ENCODE measurements at regions of chr2 and their contacts with region 1.

Region 1: DNA sequence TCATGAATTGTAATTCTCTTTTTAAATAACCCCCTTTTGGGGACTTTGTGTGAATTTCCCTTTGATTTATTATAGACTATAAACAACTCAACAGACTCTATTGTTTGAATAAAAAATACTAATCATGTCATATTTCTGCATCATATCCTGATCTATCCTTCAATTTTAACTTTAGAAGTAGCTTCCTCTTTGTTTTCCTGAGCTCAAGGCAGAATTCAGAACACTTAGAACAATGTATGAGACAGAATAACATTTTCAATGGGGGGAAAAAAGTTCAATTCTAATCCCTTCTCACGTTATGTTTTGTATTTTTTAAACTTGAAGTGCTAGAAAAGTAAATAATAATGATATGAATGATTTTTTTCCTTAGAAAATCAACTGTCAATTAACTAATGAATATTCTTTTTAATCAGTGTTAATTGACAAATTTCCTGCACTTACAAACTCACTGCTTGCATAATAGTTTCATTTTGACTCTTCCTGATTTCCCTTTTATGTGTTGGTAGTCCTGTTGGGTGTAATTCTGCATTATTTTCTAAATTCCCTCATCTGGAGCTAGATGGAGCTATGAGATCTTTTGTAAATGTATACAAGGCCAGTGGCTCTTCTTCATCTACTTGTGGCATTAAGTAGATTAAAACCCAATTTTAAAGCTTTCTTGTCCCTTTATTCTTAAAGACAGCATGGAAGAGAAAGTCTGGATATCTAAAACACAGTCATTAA is 326.1 kb downstream of the PARD3B start:
- DNase-seq: no peak
- H3K4me3 Mint-ChIP-seq: no peak overlapping the region
- H3K27ac Mint-ChIP-seq: no peak overlapping the region
- H3K4me1 Mint-ChIP-seq: peaks cover 31% of the 10 kb centered on the region
- H3K27me3 Mint-ChIP-seq: no peaks in the 10 kb centered on the region

Region 2: GRCh38 chr2:204012072-204012653 is 859.2 kb before region 1 on chr2:
- CTCF ChIA-PET with region 1: no interaction called
- intact Hi-C with region 1: no loop called
- DNase-seq: no peak
- H3K4me3 Mint-ChIP-seq: no peak overlapping the region
- H3K27ac Mint-ChIP-seq: no peak overlapping the region
- H3K4me1 Mint-ChIP-seq: peaks cover 86% of the 10 kb centered on the region
- H3K27me3 Mint-ChIP-seq: no peaks in the 10 kb centered on the region

Region 3: DNA sequence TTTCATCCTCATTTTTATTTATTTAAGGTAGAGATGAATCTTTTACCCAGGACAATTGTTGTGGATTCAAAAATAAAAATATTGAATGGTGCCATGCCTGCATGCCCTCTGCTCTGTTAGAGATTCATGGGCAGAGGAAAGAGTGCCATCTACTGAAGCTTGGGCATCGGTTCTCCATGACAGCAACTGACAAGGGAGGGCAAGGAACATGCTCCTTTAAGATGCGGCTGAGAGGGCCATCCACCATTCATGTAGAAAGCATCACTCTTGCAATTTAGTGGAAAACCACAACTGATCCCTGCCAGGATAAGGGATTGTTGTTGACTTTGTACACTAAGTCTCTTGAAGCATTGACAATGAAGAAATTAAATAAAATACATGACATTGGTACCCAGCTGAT is 246.2 kb before region 1 on chr2:
- CTCF ChIA-PET with region 1: no interaction called
- intact Hi-C with region 1: no loop called
- DNase-seq: peak; percentile 23
- H3K4me3 Mint-ChIP-seq: no peak overlapping the region
- H3K27ac Mint-ChIP-seq: no peak overlapping the region
- H3K4me1 Mint-ChIP-seq: no peaks in the 10 kb centered on the region
- H3K27me3 Mint-ChIP-seq: peaks cover 6% of the 10 kb centered on the region

Region 4: DNA sequence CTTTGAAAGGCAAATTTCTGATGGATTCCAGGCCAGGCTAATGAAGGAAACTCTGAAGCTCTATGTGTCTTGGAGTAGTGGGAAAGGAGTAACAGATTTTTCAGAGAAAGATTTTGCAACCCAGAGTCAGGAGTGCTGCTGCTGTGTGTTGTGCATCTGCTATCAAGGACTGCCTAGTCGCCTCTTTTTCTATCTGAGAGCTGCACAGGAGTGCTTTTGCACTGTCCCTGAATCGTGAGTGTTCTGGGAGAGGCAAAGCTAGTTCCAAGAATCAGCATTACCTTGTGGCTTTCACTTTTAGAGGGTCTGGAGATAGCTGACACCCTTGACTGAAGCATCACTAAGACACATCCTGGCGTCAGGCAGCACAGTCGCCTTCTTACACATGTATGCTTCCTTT is 10.3 kb after region 1 on chr2:
- CTCF ChIA-PET with region 1: interaction called, 16 read pairs
- intact Hi-C with region 1: no loop called
- DNase-seq: peak; percentile 19
- H3K4me3 Mint-ChIP-seq: no peak overlapping the region
- H3K27ac Mint-ChIP-seq: no peak overlapping the region
- H3K4me1 Mint-ChIP-seq: peaks cover 32% of the 10 kb centered on the region
- H3K27me3 Mint-ChIP-seq: no peaks in the 10 kb centered on the region

Region 5: DNA sequence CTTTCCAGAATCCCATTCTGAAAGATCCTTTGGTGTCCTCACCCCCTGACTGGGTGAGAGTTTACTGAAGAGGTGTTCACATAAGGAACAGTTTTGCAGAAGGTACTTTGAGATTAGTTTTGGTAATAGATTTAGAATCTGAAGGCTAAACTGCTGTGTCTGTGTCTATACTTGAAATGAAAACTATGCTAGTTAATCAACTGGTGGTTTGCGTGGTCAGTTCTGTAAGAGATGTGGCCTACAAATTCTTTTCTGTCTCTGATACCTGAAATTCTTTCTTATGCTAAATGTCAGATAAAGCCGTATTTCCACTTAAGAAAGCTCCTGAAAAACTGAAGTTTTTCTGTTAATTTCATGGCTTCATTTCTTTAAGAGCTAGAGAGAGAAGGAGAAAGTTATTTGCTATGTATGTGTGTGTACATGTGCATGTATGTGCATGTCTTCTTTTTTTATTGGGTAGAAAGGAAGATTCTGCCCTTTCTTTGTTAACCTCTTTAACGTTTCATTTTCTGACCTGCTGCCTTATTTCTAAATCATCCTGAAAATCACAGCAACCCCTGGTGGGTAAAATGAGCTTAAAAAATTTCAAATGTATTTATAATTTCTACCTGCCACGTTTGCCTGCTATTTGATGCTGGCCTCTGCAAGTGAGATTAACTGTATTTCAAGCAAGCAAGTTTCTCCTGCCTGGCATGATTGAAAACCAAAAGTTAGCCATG is 258.9 kb after region 1 on chr2:
- CTCF ChIA-PET with region 1: interaction called, 3 read pairs
- intact Hi-C with region 1: loop called (anchors 1 kb)
- DNase-seq: no peak
- H3K4me3 Mint-ChIP-seq: no peak overlapping the region
- H3K27ac Mint-ChIP-seq: no peak overlapping the region
- H3K4me1 Mint-ChIP-seq: peaks cover 18% of the 10 kb centered on the region
- H3K27me3 Mint-ChIP-seq: no peaks in the 10 kb centered on the region

Region 6: GRCh38 chr2:205323929-205324328 is 452.5 kb after region 1 on chr2:
- CTCF ChIA-PET with region 1: no interaction called
- intact Hi-C with region 1: loop called (anchors 10 kb)
- DNase-seq: peak; percentile 13
- H3K4me3 Mint-ChIP-seq: no peak overlapping the region
- H3K27ac Mint-ChIP-seq: no peak overlapping the region
- H3K4me1 Mint-ChIP-seq: no peaks in the 10 kb centered on the region
- H3K27me3 Mint-ChIP-seq: no peaks in the 10 kb centered on the region

Region 7: DNA sequence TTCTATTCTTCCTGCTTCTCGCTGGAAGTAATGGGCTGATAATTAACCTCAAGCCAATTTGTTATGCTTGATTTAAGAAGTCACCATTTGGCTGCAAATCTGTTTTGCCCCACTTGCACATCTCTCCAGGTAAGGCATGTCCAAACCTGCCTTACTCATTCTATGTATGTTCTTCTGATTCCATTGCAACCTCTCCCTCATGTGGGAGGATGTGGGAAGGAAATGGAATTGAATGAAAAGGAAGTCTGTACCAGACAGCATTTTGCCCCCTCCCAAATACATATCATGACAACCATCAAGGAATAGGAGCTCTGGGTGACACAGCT is 942.6 kb after region 1 on chr2:
- CTCF ChIA-PET with region 1: no interaction called
- intact Hi-C with region 1: loop called (anchors 10 kb)
- DNase-seq: no peak
- H3K4me3 Mint-ChIP-seq: no peak overlapping the region
- H3K27ac Mint-ChIP-seq: no peak overlapping the region
- H3K4me1 Mint-ChIP-seq: no peaks in the 10 kb centered on the region
- H3K27me3 Mint-ChIP-seq: peaks cover 9% of the 10 kb centered on the region

Region 8: GRCh38 chr2:205925373-205926337 is 1054.3 kb after region 1 on chr2:
- CTCF ChIA-PET with region 1: no interaction called
- intact Hi-C with region 1: loop called (anchors 5 kb)
- DNase-seq: peak; percentile 80
- H3K4me3 Mint-ChIP-seq: peak overlapping the region; percentile 8
- H3K27ac Mint-ChIP-seq: no peak overlapping the region
- H3K4me1 Mint-ChIP-seq: peaks cover 8% of the 10 kb centered on the region
- H3K27me3 Mint-ChIP-seq: peaks cover 39% of the 10 kb centered on the region

Measured in activated naive CD4-positive, alpha-beta T cell treated with anti-CD3 and anti-CD28 coated beads for 36 hours (primary cell).